A549 (cell line): ENCODE measurements at regions of chr19 and their contacts with region 1.

Region 1: DNA sequence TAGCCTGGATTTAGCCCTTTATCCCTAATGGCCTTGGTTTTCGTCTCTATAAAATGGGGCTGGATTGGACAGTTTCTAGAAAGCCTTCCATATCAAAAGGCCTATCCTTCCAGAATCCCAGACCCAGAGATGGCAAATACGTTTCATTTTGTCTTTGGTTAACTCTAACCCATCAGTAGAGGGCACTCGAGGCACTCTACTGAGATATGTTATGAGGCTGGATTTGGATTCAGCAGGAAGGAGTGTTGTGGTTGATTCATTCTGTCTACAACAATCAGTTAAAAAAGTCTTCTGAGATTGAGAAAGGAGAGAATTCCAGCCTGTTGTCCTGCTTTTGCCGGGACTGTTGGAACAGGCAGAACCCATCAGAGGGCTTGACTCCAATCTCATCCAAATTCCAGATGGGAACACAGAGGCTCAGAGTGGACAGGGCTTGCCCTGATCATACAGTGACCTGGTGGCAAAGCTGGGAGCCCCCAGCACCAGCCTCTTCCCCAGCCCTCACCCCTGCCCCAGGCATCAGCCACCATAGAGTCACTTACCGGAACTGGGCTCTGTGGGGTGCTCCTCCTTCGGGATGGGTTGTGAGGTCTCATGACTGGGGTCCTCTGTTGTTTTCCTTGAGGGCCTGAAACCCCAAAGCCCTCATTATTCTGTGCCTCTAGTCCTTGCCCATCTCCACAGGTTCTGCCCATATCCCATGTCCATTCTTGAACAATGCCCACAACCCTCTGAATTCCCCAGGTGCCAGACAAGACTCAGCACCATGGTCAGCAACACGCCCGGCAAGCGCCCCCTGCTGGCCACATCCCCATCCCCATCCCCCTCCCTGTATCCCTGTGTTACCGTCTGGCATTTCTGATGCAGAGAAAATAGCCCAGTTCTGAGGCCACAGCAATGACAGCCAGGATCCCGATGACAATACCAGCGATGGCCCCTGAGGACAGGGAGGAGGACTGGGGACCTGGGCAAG is 12.3 kb upstream of the ZNF180 start:
- DNase-seq: peak; percentile 71 to 79
- ATAC-seq: peak; percentile 86 to 91
- H3K4me3 ChIP-seq: no peak overlapping the region
- H3K27ac ChIP-seq: no peak overlapping the region
- H3K4me1 ChIP-seq: no peaks in the 10 kb centered on the region
- CTCF ChIP-seq: peak; percentile 51
- EP300 ChIP-seq: no peak
- POLR2A ChIP-seq: no peak
- RAD21 ChIP-seq: peak; percentile 59 to 77

Region 2: GRCh38 chr19:44496711-44497110 is 15.9 kb before region 1 on chr19:
- CTCF ChIA-PET with region 1: interaction called, 11 read pairs
- POLR2A ChIA-PET with region 1: no interaction called
- DNase-seq: no peak
- ATAC-seq: no peak
- H3K4me3 ChIP-seq: no peak overlapping the region
- H3K27ac ChIP-seq: no peak overlapping the region
- H3K4me1 ChIP-seq: peaks cover 5% of the 10 kb centered on the region; the same call in 1 of the 3 replicates
- CTCF ChIP-seq: no peak
- EP300 ChIP-seq: no peak
- POLR2A ChIP-seq: no peak
- RAD21 ChIP-seq: no peak

Region 3: DNA sequence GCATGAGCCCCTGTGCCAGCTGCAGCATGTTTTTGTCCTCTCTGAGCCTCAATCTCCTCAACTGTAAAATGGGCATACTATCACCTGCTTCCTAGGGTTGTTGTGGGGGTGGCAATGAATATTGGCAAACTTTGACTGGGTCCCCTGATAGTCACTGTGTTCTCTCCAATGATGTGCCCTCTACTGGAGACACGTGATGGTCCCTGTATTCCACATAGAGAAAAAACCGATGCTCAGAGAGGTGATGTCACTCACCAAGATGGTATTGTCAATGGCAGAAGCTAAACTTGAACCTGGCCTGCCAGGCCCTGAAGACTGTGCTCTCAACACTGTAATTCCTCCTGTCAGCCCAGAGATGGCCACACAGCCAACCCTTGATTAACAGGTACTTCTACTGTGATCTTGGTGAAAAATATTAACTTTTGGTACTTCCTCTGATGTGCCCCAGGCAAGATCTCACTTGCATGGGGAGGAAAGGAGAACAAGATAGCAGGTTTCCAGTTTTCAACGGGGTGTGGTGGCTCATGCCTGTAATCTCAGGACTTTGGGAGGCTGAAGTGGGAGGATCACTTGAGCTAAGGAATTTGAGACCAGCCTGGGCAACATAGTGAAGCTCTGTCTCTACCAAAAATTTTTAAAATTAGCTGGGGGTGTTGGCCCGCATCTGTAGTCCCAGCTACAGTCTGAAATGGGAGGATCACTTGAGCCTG is 13.3 kb after region 1 on chr19:
- CTCF ChIA-PET with region 1: interaction called, 19 read pairs
- POLR2A ChIA-PET with region 1: no interaction called
- DNase-seq: no peak
- ATAC-seq: no peak
- H3K4me3 ChIP-seq: no peak overlapping the region
- H3K27ac ChIP-seq: no peak overlapping the region
- H3K4me1 ChIP-seq: no peaks in the 10 kb centered on the region
- CTCF ChIP-seq: no peak; the same call in 2 of the 3 replicates
- EP300 ChIP-seq: no peak
- POLR2A ChIP-seq: no peak
- RAD21 ChIP-seq: no peak

Region 4: DNA sequence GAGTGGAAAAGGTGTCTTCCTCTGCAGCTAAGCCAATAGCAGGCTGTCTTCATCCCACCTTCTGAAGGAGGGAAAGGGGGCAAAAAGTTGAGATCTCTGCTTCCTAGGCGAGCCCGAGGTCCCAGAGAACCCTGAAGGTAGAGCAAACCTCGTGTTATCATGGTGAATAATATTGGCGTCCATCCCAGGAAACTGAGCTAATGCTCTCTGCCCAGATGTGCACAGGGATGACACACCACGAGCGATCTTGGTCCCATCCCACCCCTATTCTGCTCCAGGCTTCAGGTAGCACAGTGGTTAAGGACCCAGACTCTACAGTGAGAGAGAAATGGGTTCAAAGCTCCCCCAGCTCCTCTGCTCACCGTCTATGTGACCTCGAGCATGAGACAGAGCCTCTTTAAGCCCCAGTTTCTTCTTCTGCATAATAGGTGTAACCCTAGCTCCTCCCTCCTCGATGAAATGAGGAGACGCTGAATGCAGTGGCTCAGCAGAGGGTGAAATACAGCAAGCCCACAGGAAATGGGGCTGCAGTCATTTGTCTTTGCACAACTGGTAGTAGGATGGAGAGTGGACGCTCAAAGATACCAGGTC is 26.7 kb after region 1 on chr19:
- CTCF ChIA-PET with region 1: interaction called, 10 read pairs
- POLR2A ChIA-PET with region 1: no interaction called
- DNase-seq: no peak
- ATAC-seq: peak; percentile 53 to 54; a peak in 3 of 6 replicates
- H3K4me3 ChIP-seq: no peak overlapping the region
- H3K27ac ChIP-seq: no peak overlapping the region
- H3K4me1 ChIP-seq: no peaks in the 10 kb centered on the region
- CTCF ChIP-seq: no peak
- EP300 ChIP-seq: no peak
- POLR2A ChIP-seq: no peak
- RAD21 ChIP-seq: no peak